HepG2 (cell line): ENCODE measurements at regions of chr11 and their contacts with region 1.

Region 1: GRCh38 chr11:116415095-116415494 is 357.7 kb downstream of the BUD13 start:
- DNase-seq: no peak
- ATAC-seq: no peak
- H3K4me3 ChIP-seq: no peak overlapping the region
- H3K27ac ChIP-seq: no peak overlapping the region
- H3K4me1 ChIP-seq: peaks cover 76% of the 10 kb centered on the region
- H3K27me3 ChIP-seq: no peaks in the 10 kb centered on the region
- CTCF ChIP-seq: no peak
- EP300 ChIP-seq: no peak
- POLR2A ChIP-seq: no peak
- RAD21 ChIP-seq: no peak

Region 2: DNA sequence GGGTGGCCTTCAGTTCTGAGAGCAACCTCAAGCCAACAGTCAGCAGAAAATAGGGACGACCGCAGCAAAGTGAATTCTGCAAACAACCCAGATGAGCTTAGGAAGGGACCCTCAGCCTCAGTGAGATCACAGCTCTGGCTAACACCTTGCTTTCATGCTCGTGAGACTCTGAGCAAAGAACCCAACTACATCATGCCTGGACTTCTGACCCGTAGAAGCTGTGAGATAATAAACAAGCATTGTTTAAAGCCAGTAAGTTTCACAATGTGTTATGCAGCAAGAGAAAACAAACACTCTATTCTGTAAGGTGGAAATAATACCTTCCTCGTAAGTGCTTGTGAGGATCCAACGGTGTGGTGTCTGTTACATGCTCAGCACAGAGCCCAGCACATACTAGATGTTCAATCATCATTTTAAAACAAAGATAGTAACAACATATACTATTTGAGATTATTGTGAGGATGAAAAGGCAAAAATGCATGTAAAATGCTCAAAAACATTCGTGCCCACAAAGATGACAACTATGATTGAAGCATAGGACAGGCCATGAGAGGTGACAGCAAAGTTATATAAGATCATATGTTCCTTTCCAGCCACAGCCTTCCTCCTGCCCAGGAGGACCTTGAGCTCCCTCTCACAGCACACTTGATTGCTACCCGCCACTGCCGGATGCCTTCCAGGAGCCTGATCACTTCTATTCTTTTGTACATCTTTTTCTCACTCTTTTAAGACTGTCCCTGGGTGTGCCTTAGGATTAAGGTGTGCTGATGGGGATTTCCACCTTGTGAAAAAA is 75.6 kb before region 1 on chr11:
- CTCF ChIA-PET with region 1: no interaction called
- POLR2A ChIA-PET with region 1: interaction called, 10 read pairs
- in situ Hi-C with region 1: no loop called
- intact Hi-C with region 1: no loop called
- DNase-seq: peak; percentile 86
- ATAC-seq: peak; percentile 89
- H3K4me3 ChIP-seq: peak overlapping the region in 2 of 3 experiments; percentile 4 to 26; a peak in 3 of 6 replicates
- H3K27ac ChIP-seq: peak overlapping the region; percentile 67
- H3K4me1 ChIP-seq: peaks cover 53% of the 10 kb centered on the region
- H3K27me3 ChIP-seq: no peaks in the 10 kb centered on the region; a peak in 1 of 5 replicates
- CTCF ChIP-seq: no peak
- EP300 ChIP-seq: peak in 1 of 2 experiments; percentile 87; a peak in 2 of 4 replicates
- POLR2A ChIP-seq: no peak
- RAD21 ChIP-seq: no peak

Region 3: DNA sequence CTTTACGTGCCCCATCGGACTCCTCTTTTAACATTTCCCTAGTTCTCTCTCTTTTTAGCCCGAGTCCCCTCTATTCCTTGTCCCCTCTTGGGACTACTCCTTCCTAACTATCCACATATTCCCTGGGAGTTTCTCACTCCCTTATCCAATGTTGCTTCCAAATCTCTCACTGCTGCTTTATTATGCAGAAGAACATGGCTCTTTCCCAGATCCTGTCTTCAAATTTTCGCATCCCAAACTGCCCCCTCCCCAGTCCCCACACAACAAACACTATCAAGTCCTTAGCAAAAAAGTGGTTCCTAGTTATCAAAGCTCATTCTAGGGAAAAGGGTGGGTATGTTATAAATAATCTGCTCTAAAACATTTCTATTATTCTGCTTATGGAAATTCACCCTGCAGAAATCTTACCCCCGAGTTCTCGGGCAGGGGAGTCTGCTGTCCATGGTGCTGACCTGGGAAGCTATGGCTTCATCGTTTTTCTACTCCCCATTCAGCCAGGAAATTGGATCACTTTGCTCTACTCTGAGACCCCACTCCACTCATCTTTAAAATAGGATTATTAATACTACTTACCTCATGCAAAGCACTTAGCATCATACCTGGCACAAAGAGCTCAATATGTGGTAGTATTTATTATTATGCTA is 35.8 kb before region 1 on chr11:
- CTCF ChIA-PET with region 1: no interaction called
- POLR2A ChIA-PET with region 1: no interaction called
- in situ Hi-C with region 1: no loop called
- intact Hi-C with region 1: loop called (anchors 1 kb)
- DNase-seq: peak; percentile 21
- ATAC-seq: no peak
- H3K4me3 ChIP-seq: no peak overlapping the region
- H3K27ac ChIP-seq: no peak overlapping the region
- H3K4me1 ChIP-seq: peaks cover 32% of the 10 kb centered on the region
- H3K27me3 ChIP-seq: no peaks in the 10 kb centered on the region
- CTCF ChIP-seq: no peak
- EP300 ChIP-seq: no peak
- POLR2A ChIP-seq: no peak
- RAD21 ChIP-seq: no peak

Region 4: DNA sequence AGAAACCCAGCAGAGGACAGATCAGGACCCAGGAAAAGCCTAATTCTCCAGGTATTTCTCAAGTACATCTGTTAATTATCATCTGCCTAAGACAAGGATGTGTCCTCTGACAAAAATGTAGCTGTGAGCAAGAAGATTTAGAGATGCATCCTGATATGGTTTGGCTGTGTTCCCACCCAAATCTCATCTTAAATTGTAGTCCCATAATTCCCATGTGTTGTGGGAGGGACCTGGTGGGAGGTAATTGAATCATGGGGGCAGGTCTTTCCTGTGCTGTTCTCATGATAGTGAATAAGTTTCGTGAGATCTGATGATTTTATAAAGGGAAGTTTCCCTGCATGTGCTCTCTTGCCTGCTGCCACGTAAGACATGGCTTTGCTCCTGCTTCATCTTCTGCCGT is 24.1 kb before region 1 on chr11:
- CTCF ChIA-PET with region 1: no interaction called
- POLR2A ChIA-PET with region 1: no interaction called
- in situ Hi-C with region 1: no loop called
- intact Hi-C with region 1: no loop called
- DNase-seq: no peak
- ATAC-seq: no peak
- H3K4me3 ChIP-seq: no peak overlapping the region
- H3K27ac ChIP-seq: no peak overlapping the region
- H3K4me1 ChIP-seq: peaks cover 9% of the 10 kb centered on the region
- H3K27me3 ChIP-seq: no peaks in the 10 kb centered on the region; a peak in 1 of 5 replicates
- CTCF ChIP-seq: no peak
- EP300 ChIP-seq: no peak
- POLR2A ChIP-seq: no peak
- RAD21 ChIP-seq: no peak

Region 5: DNA sequence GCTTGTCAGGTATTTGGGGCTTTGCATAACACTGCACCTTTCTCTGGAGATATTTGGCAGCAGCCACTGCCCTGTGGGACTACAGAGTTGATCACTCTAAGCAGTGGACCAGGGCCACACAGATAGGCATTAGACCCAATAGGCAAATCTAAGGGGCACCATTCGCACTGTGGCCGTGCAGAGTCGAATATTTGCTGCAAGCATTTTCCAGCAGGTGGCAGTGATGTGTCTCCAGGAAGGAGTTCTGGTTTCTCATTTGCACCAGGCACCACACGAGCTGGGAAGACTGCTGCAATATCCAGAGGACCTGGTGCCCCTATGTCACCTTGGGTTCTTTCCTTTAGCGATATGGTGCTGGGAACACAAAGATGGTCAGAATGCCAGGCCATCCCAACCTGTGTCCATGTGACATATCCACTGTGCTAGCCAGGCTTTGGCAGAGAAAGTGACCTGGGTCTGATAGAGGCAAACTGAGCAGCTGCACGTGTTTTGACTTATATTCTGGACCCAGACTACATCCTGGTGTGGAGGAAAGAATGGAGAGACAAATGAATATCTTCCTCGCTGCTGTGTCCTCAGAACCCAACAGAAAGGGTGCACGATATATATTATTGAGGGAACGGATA is 39.0 kb after region 1 on chr11:
- CTCF ChIA-PET with region 1: no interaction called
- POLR2A ChIA-PET with region 1: no interaction called
- in situ Hi-C with region 1: no loop called
- intact Hi-C with region 1: no loop called
- DNase-seq: peak; percentile 43
- ATAC-seq: peak; percentile 87
- H3K4me3 ChIP-seq: no peak overlapping the region
- H3K27ac ChIP-seq: no peak overlapping the region
- H3K4me1 ChIP-seq: no peaks in the 10 kb centered on the region
- H3K27me3 ChIP-seq: no peaks in the 10 kb centered on the region
- CTCF ChIP-seq: peak; percentile 78
- EP300 ChIP-seq: no peak
- POLR2A ChIP-seq: no peak
- RAD21 ChIP-seq: 0 out of 2 replicates have a peak, but pooled peaks have one; percentile 47

Region 6: DNA sequence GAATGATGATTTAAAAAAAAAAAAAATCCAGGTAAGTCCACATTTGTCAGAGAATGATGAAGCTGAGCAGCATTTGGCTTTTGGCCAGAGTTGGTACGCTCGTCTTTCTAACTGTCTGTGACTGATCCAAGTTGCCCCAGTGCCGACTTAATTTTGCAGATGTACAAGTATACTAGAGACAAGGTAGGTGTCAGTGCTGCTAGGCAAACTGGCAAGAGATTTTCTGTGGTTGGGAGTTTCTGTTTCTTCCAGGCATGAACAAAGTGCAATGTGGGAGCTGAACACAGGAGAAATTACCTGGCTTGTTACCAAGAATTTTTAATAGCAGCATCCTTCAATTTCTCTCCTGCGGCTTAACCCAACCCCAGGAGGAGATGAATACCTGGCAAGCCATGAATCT is 50.0 kb after region 1 on chr11:
- CTCF ChIA-PET with region 1: no interaction called
- POLR2A ChIA-PET with region 1: no interaction called
- in situ Hi-C with region 1: no loop called
- intact Hi-C with region 1: no loop called
- DNase-seq: no peak
- ATAC-seq: no peak
- H3K4me3 ChIP-seq: no peak overlapping the region
- H3K27ac ChIP-seq: no peak overlapping the region
- H3K4me1 ChIP-seq: no peaks in the 10 kb centered on the region
- H3K27me3 ChIP-seq: no peaks in the 10 kb centered on the region
- CTCF ChIP-seq: no peak
- EP300 ChIP-seq: no peak
- POLR2A ChIP-seq: no peak
- RAD21 ChIP-seq: no peak